H1 (cell line): ENCODE measurements at regions of chr12 and their contacts with region 1.

Region 1: DNA sequence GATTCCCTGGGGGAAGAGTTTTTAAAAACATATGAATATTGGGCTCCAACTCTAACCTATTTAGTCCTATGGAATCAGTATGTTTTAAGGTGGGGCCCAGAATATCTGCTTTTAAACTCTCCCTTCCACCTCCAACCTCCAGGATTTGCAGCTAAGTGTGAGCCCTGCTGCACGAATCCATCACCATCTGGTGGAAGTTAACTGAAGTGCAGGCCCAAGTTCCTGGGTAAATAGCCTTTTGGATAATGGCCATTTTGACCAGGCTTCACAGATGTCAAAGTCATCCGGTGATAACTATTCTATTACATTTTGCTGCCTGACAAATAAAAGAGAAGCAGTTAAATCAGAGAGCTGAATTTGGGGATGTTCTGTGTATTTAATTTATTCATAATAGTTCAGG is 58.1 kb upstream of the RMST start:
- DNase-seq: peak in 1 of 2 experiments; percentile 62
- H3K4me3 ChIP-seq: no peak overlapping the region
- H3K27ac ChIP-seq: no peak overlapping the region
- H3K4me1 ChIP-seq: no peaks in the 10 kb centered on the region
- H3K27me3 ChIP-seq: no peaks in the 10 kb centered on the region
- CTCF ChIP-seq: peak; percentile 68 to 97 (median 93)
- EP300 ChIP-seq: no peak
- POLR2A ChIP-seq: no peak
- RAD21 ChIP-seq: peak; percentile 97 to 99

Region 2: GRCh38 chr12:96985480-96986362 is 418.8 kb before region 1 on chr12:
- CTCF ChIA-PET with region 1: interaction called, 98 read pairs
- POLR2A ChIA-PET with region 1: no interaction called
- DNase-seq: peak in 1 of 2 experiments; percentile 82
- H3K4me3 ChIP-seq: peak overlapping the region; percentile 44 to 66 (median 51)
- H3K27ac ChIP-seq: no peak overlapping the region
- H3K4me1 ChIP-seq: peaks cover 0 to 14% (median 5%) of the 10 kb centered on the region in 4 experiments; a peak in 4 of 7 replicates
- H3K27me3 ChIP-seq: peaks cover 0 to 3% (median 2%) of the 10 kb centered on the region in 4 experiments; a peak in 3 of 7 replicates
- CTCF ChIP-seq: peak; percentile 83 to 97 (median 83)
- EP300 ChIP-seq: peak in 1 of 2 experiments; percentile 48; a peak in 1 of 3 replicates
- POLR2A ChIP-seq: no peak
- RAD21 ChIP-seq: peak; percentile 81 to 92

Region 3: GRCh38 chr12:96994900-96995299 is 409.6 kb before region 1 on chr12:
- CTCF ChIA-PET with region 1: interaction called, 98 read pairs
- POLR2A ChIA-PET with region 1: no interaction called
- DNase-seq: no peak
- H3K4me3 ChIP-seq: no peak overlapping the region
- H3K27ac ChIP-seq: no peak overlapping the region
- H3K4me1 ChIP-seq: peaks cover 0 to 3% (median 1%) of the 10 kb centered on the region in 4 experiments; a peak in 1 of 7 replicates
- H3K27me3 ChIP-seq: no peaks in the 10 kb centered on the region
- CTCF ChIP-seq: no peak
- EP300 ChIP-seq: no peak
- POLR2A ChIP-seq: no peak
- RAD21 ChIP-seq: no peak

Region 4: GRCh38 chr12:97148941-97149559 is 255.5 kb before region 1 on chr12:
- CTCF ChIA-PET with region 1: interaction called, 26 read pairs
- POLR2A ChIA-PET with region 1: no interaction called
- DNase-seq: peak; percentile 49 to 88
- H3K4me3 ChIP-seq: no peak overlapping the region
- H3K27ac ChIP-seq: no peak overlapping the region
- H3K4me1 ChIP-seq: no peaks in the 10 kb centered on the region; a peak in 1 of 7 replicates
- H3K27me3 ChIP-seq: no peaks in the 10 kb centered on the region
- CTCF ChIP-seq: peak; percentile 93 to 97 (median 97)
- EP300 ChIP-seq: no peak
- POLR2A ChIP-seq: no peak
- RAD21 ChIP-seq: peak; percentile 96

Region 5: GRCh38 chr12:97308576-97309198 is 95.9 kb before region 1 on chr12:
- CTCF ChIA-PET with region 1: interaction called, 10 read pairs
- POLR2A ChIA-PET with region 1: no interaction called
- DNase-seq: no peak
- H3K4me3 ChIP-seq: no peak overlapping the region
- H3K27ac ChIP-seq: no peak overlapping the region
- H3K4me1 ChIP-seq: peaks cover 1 to 12% (median 5%) of the 10 kb centered on the region in 4 experiments
- H3K27me3 ChIP-seq: peaks cover 0 to 6% (median 0%) of the 10 kb centered on the region in 4 experiments; a peak in 1 of 7 replicates
- CTCF ChIP-seq: peak in 2 of 3 experiments; percentile 13 to 53; a peak in 2 of 4 replicates
- EP300 ChIP-seq: no peak
- POLR2A ChIP-seq: no peak
- RAD21 ChIP-seq: peak; percentile 46 to 58

Region 6: GRCh38 chr12:97417568-97418218 is 13.2 kb after region 1 on chr12:
- CTCF ChIA-PET with region 1: interaction called, 23 read pairs
- POLR2A ChIA-PET with region 1: no interaction called
- DNase-seq: no peak
- H3K4me3 ChIP-seq: no peak overlapping the region
- H3K27ac ChIP-seq: no peak overlapping the region
- H3K4me1 ChIP-seq: no peaks in the 10 kb centered on the region
- H3K27me3 ChIP-seq: no peaks in the 10 kb centered on the region
- CTCF ChIP-seq: no peak
- EP300 ChIP-seq: no peak
- POLR2A ChIP-seq: no peak
- RAD21 ChIP-seq: no peak

Region 7: DNA sequence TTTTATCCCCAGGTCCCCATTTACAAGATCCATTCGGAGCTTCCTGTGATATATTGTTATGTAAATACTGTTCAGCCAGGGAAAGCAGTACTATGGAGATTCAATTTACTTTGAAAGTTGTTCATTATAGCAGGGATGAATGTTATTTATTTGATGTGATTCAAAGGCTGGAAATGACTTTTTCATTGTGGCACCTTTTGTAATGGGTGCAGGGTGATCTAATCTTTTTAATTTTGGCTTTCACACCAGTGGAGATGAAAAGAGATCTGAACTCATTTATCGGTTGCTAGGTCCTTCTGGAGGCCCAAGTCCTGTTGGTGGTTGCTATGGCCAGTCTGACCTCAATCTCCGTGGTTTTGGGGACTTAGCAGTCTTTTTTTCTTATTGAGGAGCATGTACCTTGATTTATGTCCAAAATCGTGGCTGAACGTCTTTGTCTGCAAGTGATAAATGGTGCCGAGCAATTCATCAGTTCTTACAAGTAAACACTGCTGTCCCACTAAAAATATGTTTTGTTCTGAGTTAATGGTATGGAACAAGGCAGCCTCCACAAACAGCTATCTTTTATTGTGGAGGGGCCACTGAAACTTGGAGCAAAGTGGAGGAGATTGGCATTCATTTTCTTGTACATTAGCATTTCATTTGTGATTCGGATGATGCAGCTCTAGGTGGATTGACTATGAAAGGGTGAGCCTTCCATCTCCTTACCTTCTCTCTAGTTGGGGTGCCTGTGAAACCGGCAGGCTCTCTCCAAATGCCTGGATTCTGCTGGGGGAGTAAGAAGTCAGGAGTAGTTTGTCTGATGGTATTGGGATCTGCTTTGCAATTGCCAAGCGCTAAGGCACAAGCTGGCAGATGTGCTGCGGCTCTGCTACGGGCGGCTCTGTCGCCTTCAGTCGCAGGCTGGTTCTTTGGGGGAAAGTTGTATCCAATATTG is 60.1 kb after region 1 on chr12:
- CTCF ChIA-PET with region 1: interaction called, 11 read pairs
- POLR2A ChIA-PET with region 1: no interaction called
- DNase-seq: peak; percentile 68 to 71
- H3K4me3 ChIP-seq: peak overlapping the region; percentile 48 to 94 (median 73)
- H3K27ac ChIP-seq: peak overlapping the region; percentile 83; the same call in 1 of the 2 replicates
- H3K4me1 ChIP-seq: peaks cover 0 to 12% (median 8%) of the 10 kb centered on the region in 4 experiments; a peak in 6 of 7 replicates
- H3K27me3 ChIP-seq: peaks cover 0 to 4% (median 0%) of the 10 kb centered on the region in 4 experiments; a peak in 1 of 7 replicates
- CTCF ChIP-seq: no peak
- EP300 ChIP-seq: 0 out of 3 replicates have a peak, but pooled peaks of 1 of the 2 experiments have one; percentile 44
- POLR2A ChIP-seq: peak; percentile 82 to 98
- RAD21 ChIP-seq: peak; percentile 8 to 28; a peak in 1 of 4 replicates